ENCODE measurements at regions of chr5 and their contacts with region 1.

Region 1: GRCh38 chr5:139968547-139969261 is 74.4 kb downstream of the NRG2 start:
- DNase-seq: peak; percentile 97
- H3K4me3 Mint-ChIP-seq: no peak overlapping the region
- H3K27ac Mint-ChIP-seq: no peak overlapping the region
- H3K4me1 Mint-ChIP-seq: no peaks in the 10 kb centered on the region
- H3K27me3 Mint-ChIP-seq: peaks cover 71% of the 10 kb centered on the region
- CTCF ChIP-seq: peak; percentile 100

Region 2: GRCh38 chr5:139774980-139775661 is 193.6 kb before region 1 on chr5:
- CTCF ChIA-PET with region 1: interaction called, 11 read pairs
- intact Hi-C with region 1: no loop called
- DNase-seq: peak; percentile 92
- H3K4me3 Mint-ChIP-seq: no peak overlapping the region
- H3K27ac Mint-ChIP-seq: no peak overlapping the region
- H3K4me1 Mint-ChIP-seq: no peaks in the 10 kb centered on the region
- H3K27me3 Mint-ChIP-seq: peaks cover 84% of the 10 kb centered on the region
- CTCF ChIP-seq: peak; percentile 97

Region 3: GRCh38 chr5:139787568-139788293 is 181.0 kb before region 1 on chr5:
- CTCF ChIA-PET with region 1: interaction called, 102 read pairs
- intact Hi-C with region 1: loop called (anchors 1 kb)
- DNase-seq: peak; percentile 96
- H3K4me3 Mint-ChIP-seq: peak overlapping the region; percentile 68
- H3K27ac Mint-ChIP-seq: no peak overlapping the region
- H3K4me1 Mint-ChIP-seq: no peaks in the 10 kb centered on the region
- H3K27me3 Mint-ChIP-seq: peaks cover 75% of the 10 kb centered on the region
- CTCF ChIP-seq: peak; percentile 93

Region 4: GRCh38 chr5:139844472-139845145 is 124.1 kb before region 1 on chr5:
- CTCF ChIA-PET with region 1: interaction called, 6 read pairs
- intact Hi-C with region 1: loop called (anchors 1 kb)
- DNase-seq: peak; percentile 90
- H3K4me3 Mint-ChIP-seq: no peak overlapping the region
- H3K27ac Mint-ChIP-seq: no peak overlapping the region
- H3K4me1 Mint-ChIP-seq: peaks cover 4% of the 10 kb centered on the region
- H3K27me3 Mint-ChIP-seq: peaks cover 92% of the 10 kb centered on the region
- CTCF ChIP-seq: peak; percentile 87

Region 5: DNA sequence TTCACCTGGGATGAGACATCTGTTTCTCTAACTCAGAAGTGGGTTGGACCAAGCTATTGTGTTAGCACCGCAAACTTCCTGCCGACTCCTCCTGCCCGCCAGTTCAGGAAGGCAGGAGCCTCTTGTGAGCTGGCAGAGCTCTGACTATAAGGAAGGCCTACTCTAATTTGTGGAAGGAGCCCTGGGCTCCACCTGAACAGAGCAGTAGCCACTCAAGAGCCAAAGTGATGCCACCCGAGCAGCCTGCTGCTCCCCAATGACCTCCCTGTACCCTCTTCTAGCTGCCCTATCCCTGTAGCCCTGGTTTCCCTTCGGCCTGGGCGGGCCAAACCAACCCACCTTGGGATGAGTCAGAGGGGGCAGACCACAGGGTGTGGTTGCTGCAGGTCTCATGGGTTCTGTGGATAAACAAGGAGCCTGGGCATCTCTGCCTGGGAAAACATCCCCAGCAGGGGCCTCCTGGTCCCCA is 91.5 kb before region 1 on chr5:
- CTCF ChIA-PET with region 1: interaction called, 3 read pairs
- intact Hi-C with region 1: loop called (anchors 5 kb)
- DNase-seq: peak; percentile 57
- H3K4me3 Mint-ChIP-seq: no peak overlapping the region
- H3K27ac Mint-ChIP-seq: no peak overlapping the region
- H3K4me1 Mint-ChIP-seq: peaks cover 8% of the 10 kb centered on the region
- H3K27me3 Mint-ChIP-seq: peaks cover 49% of the 10 kb centered on the region
- CTCF ChIP-seq: no peak

Region 6: DNA sequence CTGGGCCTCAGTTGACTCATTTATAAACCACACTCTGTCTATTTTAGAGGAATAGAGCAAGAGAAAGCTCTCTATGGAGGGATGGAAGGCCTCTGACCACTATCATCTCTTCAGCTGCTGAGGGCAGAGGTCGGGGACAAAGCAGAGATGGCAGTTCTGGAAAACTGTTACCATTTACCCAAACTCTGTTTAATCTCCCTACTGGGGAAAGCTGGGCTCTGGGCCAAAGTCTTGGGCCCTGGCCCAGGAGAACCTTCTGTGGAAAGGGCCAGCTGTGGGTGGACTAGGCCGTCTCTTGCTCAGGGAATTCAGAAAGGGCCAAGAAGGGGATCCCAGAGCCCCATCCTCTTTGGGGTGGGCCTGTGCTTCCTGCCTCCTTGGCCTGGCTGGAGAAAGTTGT is 73.1 kb before region 1 on chr5:
- CTCF ChIA-PET with region 1: no interaction called
- intact Hi-C with region 1: no loop called
- DNase-seq: no peak
- H3K4me3 Mint-ChIP-seq: no peak overlapping the region
- H3K27ac Mint-ChIP-seq: no peak overlapping the region
- H3K4me1 Mint-ChIP-seq: no peaks in the 10 kb centered on the region
- H3K27me3 Mint-ChIP-seq: peaks cover 100% of the 10 kb centered on the region
- CTCF ChIP-seq: no peak

Region 7: DNA sequence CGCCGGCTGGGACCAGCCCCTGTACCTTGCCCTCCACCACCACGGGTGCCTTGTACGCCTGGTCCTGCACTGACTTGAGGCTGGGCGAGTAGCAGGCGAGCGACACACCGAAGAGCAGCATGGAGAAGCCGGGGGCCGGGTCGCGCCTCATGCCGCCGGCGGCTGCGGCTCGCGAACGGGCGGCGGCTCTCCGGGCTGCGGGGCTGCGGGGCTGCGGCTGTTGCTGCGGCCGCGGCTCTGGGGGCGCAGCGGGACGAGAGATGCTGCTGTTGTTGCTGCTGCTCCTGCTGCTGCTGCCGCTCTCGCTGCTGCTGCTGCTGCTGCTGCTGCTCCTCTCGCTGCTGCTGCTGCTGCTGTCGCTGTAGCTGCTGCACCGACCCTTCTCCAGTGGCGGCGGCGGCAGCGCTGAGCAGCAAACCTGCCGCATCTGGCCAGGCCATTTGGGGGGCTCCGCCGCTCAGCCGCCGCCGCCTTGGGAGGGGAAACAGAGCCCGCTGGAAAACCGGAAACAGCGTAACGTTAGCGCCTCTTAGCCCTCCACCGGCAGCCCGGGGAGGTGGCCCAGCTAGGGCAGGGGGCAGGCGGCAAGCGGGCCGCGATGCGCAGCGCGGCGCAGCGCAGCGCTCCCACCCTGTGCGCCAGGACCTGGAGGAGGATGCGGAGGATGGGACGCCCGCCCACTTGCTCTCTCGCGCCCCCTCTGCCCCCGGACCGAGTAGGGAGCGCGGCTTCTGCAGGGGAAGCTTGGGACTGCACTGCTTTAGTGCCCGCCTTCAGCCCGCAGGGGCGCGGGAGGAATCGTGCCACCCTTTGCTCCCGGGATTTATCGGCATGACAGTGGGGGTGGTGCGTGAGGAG is 74.2 kb after region 1 on chr5 and contains the start of gene NRG2:
- CTCF ChIA-PET with region 1: interaction called, 10 read pairs
- intact Hi-C with region 1: loop called (anchors 5 kb)
- DNase-seq: peak; percentile 76
- H3K4me3 Mint-ChIP-seq: peak within 1 kb of the TSS; percentile 83
- H3K27ac Mint-ChIP-seq: no peak within 1 kb of the TSS
- H3K4me1 Mint-ChIP-seq: peaks cover 30% of the 10 kb centered on the region
- H3K27me3 Mint-ChIP-seq: peaks cover 28% of the 10 kb centered on the region
- CTCF ChIP-seq: peak; percentile 61
- total RNA-seq, gene NRG2: 1.4 and 3.1 TPM in 2 replicates